K562 (cell line): ENCODE measurements at regions of chr1 and their contacts with region 1.

Region 1: GRCh38 chr1:186046437-186047233 is 312.4 kb downstream of the HMCN1 start:
- DNase-seq: peak; percentile 17 to 73 (median 46)
- ATAC-seq: peak; percentile 81
- H3K4me3 ChIP-seq: no peak overlapping the region
- H3K27ac ChIP-seq: peak overlapping the region; percentile 31; the same call in 1 of the 3 replicates
- H3K4me1 ChIP-seq: peaks cover 4 to 15% of the 10 kb centered on the region in 2 experiments; a peak in 3 of 5 replicates
- H3K27me3 ChIP-seq: no peaks in the 10 kb centered on the region
- CTCF ChIP-seq: no peak
- EP300 ChIP-seq: peak; percentile 92
- POLR2A ChIP-seq: no peak
- RAD21 ChIP-seq: no peak; a peak in 1 of 4 replicates

Region 2: GRCh38 chr1:186102557-186103148 is 56.0 kb after region 1 on chr1:
- CTCF ChIA-PET with region 1: no interaction called
- POLR2A ChIA-PET with region 1: no interaction called
- in situ Hi-C with region 1: no loop called
- intact Hi-C with region 1: loop called (anchors 2 kb)
- DNase-seq: peak in 1 of 4 experiments; percentile 42
- ATAC-seq: peak; percentile 78
- H3K4me3 ChIP-seq: no peak overlapping the region
- H3K27ac ChIP-seq: peak overlapping the region; percentile 31; the same call in 2 of the 3 replicates
- H3K4me1 ChIP-seq: peaks cover 0 to 7% of the 10 kb centered on the region in 2 experiments; a peak in 3 of 5 replicates
- H3K27me3 ChIP-seq: no peaks in the 10 kb centered on the region
- CTCF ChIP-seq: no peak
- EP300 ChIP-seq: peak; percentile 26; the same call in 1 of the 2 replicates
- POLR2A ChIP-seq: no peak
- RAD21 ChIP-seq: no peak

Region 3: DNA sequence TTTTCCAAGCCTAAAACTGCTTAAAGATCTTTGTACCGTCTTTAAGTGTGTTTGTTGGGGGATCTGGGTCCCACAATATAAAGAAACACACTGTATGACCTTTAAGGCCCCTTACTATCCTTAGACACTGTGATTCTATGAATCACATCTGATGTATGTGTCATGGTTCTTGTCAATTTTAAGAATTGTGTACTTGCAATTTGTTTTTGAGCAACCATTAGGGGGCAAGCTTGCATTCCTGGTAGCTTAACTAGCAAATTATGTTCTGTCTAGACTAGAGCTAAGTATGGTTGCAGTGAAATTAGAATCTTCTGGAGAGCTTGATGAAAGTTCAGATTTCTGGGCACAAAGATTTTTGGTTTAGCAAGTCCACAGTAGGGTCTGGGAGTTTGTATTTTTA is 109.0 kb after region 1 on chr1:
- CTCF ChIA-PET with region 1: no interaction called
- POLR2A ChIA-PET with region 1: no interaction called
- in situ Hi-C with region 1: no loop called
- intact Hi-C with region 1: no loop called
- DNase-seq: peak in 2 of 4 experiments; percentile 30 to 60
- ATAC-seq: peak; percentile 88
- H3K4me3 ChIP-seq: no peak overlapping the region
- H3K27ac ChIP-seq: no peak overlapping the region
- H3K4me1 ChIP-seq: no peaks in the 10 kb centered on the region
- H3K27me3 ChIP-seq: no peaks in the 10 kb centered on the region
- CTCF ChIP-seq: peak; percentile 59 to 80 (median 65); a peak in 5 of 6 replicates
- EP300 ChIP-seq: no peak
- POLR2A ChIP-seq: no peak
- RAD21 ChIP-seq: peak; percentile 89 to 95